K562 (cell line): ENCODE measurements at regions of chr18 and their contacts with region 1.

Region 1: GRCh38 chr18:3604498-3605408 is 154.8 kb downstream of the TGIF1 start:
- DNase-seq: peak in 3 of 4 experiments; percentile 38 to 77 (median 39)
- ATAC-seq: peak; percentile 38
- H3K4me3 ChIP-seq: peak overlapping the region; percentile 55
- H3K27ac ChIP-seq: peak overlapping the region; percentile 97
- H3K4me1 ChIP-seq: peaks cover 37 to 51% of the 10 kb centered on the region in 2 experiments
- H3K27me3 ChIP-seq: no peaks in the 10 kb centered on the region
- CTCF ChIP-seq: no peak
- EP300 ChIP-seq: peak; percentile 60
- POLR2A ChIP-seq: no peak
- RAD21 ChIP-seq: no peak; a peak in 2 of 4 replicates

Region 2: DNA sequence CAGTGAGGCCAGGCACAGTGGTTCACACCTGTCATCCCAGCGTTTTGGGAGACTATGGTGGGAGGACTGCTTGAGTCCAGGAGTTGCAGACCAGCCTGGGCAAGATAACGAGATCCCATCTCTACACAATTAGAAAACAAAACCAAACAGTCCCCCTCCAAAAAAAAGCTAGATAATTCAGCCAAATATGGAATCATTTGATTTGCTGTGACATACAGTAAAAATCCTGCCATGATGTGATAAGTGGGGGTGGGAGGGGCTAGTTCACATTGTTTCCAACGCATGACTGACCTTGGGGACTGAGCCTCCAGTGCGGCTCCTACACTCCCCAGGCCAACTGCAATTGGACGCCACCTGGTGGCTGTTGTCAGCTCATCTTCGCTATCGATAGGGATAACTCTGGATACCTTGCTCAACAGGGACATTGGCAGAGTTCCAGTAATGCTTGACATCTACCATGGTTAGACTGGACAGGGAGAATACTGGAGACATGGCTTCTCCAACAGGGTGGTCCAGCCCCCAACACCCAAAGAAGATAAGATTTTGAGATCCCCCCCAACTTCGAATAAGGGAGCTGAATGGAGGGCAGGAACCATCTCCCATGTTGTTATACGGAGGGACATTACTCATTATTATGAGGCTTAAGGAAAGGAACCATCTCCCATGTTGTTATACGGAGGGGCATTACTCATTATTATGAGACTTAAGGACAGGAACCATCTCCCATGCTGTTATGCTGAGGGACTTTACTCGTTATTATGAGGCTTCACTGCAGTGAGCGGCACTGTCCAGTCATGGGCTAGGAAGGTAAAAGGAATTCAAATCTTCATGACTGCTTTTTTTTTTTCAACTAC is 18.9 kb before region 1 on chr18:
- CTCF ChIA-PET with region 1: no interaction called
- POLR2A ChIA-PET with region 1: interaction called, 20 read pairs
- in situ Hi-C with region 1: no loop called
- intact Hi-C with region 1: no loop called
- DNase-seq: peak; percentile 90 to 98 (median 93)
- ATAC-seq: peak; percentile 96
- H3K4me3 ChIP-seq: no peak overlapping the region
- H3K27ac ChIP-seq: peak overlapping the region; percentile 64
- H3K4me1 ChIP-seq: peaks cover 25 to 32% of the 10 kb centered on the region in 2 experiments
- H3K27me3 ChIP-seq: no peaks in the 10 kb centered on the region
- CTCF ChIP-seq: peak; percentile 94 to 98 (median 98)
- EP300 ChIP-seq: peak; percentile 77
- POLR2A ChIP-seq: no peak
- RAD21 ChIP-seq: peak; percentile 96 to 97

Region 3: DNA sequence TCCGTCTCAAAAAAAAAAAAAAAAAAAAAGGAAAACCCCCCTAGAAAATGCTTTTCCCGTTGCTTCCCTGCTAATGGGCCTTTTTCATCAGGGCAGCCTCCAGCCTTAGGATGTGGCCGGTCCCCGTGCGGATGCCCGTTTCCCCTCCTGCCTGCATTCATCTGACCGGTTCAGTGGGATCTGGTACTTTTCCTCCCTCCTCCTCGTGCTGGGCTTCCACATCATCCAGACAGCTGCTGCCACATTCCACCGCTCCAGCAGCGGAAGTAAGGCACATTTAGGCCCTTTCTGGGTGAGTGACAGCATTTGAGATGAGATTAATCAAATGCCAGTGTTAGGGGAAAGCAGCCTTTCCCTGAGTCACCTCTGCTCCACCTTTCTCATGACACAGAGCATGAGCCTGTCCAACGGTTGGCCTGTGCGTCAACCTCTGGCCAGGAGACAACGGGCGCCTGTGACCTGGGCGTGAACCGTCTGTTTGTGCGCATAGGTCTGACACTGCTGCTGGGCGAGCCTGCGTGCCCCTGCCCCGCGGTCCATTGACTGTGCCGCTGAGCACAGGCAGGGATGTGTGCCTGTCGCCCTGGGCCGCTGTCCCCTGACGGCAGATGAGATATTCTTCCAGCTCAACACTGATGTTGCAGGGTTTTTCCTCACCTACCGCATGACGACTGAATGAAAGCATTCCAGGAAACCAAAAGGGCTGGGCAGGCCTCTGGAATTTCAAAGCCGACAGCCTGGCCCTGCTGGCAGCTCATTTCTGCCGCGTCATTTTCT is 19.2 kb after region 1 on chr18:
- CTCF ChIA-PET with region 1: interaction called, 3 read pairs
- POLR2A ChIA-PET with region 1: interaction called, 80 read pairs
- in situ Hi-C with region 1: no loop called
- intact Hi-C with region 1: loop called (anchors 1 kb)
- DNase-seq: peak; percentile 83 to 97 (median 85)
- ATAC-seq: peak; percentile 86
- H3K4me3 ChIP-seq: peak overlapping the region; percentile 26
- H3K27ac ChIP-seq: peak overlapping the region; percentile 98
- H3K4me1 ChIP-seq: peaks cover 59 to 66% of the 10 kb centered on the region in 2 experiments
- H3K27me3 ChIP-seq: no peaks in the 10 kb centered on the region
- CTCF ChIP-seq: no peak; a peak in 1 of 6 replicates
- EP300 ChIP-seq: peak; percentile 81
- POLR2A ChIP-seq: peak; percentile 92
- RAD21 ChIP-seq: no peak; a peak in 2 of 4 replicates

Region 4: DNA sequence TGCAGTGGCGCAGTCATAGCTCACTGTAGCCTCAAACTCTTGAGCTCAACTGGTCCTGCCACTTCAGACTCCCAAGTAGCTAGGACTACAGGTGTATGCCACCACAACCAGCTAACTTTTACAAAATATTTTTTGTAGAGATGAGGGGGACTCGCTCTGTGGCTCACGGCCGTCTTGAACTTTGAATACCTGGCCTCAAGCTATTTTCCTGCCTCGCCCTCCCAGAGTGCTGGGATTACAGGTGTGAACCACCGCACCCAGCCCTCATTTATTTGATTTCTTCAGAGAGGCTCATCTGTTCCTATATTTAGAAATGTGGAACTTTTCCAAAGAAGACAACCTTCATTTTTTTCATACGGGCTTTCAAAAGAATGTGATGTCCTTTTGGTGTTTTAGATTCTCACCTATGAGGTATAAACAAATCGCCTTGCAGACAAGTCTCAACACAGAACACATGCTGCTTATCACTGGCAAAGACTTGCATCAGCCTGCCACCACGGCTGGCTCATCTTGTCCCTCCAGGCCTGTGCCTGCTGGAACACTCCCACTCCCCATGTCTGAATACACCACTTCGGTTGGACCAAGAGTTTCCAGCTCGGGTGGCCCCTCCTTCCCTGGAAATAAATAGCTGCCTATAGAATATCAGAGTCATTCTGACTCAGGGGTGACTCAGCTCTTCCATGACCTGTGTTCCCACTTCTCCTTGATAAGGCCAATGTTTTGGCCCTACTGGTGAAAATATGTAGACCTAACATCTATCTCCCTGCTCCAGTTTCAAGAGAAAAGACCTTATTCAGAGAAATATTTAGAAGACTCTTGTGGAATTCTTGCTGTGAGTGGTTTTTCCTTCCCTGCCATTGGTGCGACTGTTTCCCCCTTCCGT is 47.9 kb after region 1 on chr18:
- CTCF ChIA-PET with region 1: no interaction called
- POLR2A ChIA-PET with region 1: interaction called, 80 read pairs
- in situ Hi-C with region 1: loop called (anchors 5 kb)
- intact Hi-C with region 1: loop called (anchors 1 kb)
- DNase-seq: peak; percentile 97 to 100 (median 98)
- ATAC-seq: peak; percentile 86
- H3K4me3 ChIP-seq: peak overlapping the region; percentile 43
- H3K27ac ChIP-seq: peak overlapping the region; percentile 83
- H3K4me1 ChIP-seq: peaks cover 57 to 64% of the 10 kb centered on the region in 2 experiments
- H3K27me3 ChIP-seq: no peaks in the 10 kb centered on the region; a peak in 1 of 5 replicates
- CTCF ChIP-seq: peak in 2 of 3 experiments; percentile 9 to 43; a peak in 3 of 6 replicates
- EP300 ChIP-seq: peak; percentile 99
- POLR2A ChIP-seq: no peak
- RAD21 ChIP-seq: peak in 1 of 2 experiments; percentile 29; a peak in 3 of 4 replicates